Activated CD4-positive, alpha-beta T cell treated with anti-CD3 and anti-CD28 coated beads for 36 hours (primary cell): ENCODE measurements at regions of chr16 and their contacts with region 1.

Region 1: GRCh38 chr16:28990375-28991040 is 5.7 kb downstream of the LAT start:
- DNase-seq: peak; percentile 88
- ATAC-seq: peak; percentile 84
- H3K4me3 Mint-ChIP-seq: peak overlapping the region; percentile 99
- H3K27ac Mint-ChIP-seq: peak overlapping the region; percentile 97
- H3K4me1 Mint-ChIP-seq: peaks cover 64% of the 10 kb centered on the region
- H3K27me3 Mint-ChIP-seq: no peaks in the 10 kb centered on the region

Region 2: DNA sequence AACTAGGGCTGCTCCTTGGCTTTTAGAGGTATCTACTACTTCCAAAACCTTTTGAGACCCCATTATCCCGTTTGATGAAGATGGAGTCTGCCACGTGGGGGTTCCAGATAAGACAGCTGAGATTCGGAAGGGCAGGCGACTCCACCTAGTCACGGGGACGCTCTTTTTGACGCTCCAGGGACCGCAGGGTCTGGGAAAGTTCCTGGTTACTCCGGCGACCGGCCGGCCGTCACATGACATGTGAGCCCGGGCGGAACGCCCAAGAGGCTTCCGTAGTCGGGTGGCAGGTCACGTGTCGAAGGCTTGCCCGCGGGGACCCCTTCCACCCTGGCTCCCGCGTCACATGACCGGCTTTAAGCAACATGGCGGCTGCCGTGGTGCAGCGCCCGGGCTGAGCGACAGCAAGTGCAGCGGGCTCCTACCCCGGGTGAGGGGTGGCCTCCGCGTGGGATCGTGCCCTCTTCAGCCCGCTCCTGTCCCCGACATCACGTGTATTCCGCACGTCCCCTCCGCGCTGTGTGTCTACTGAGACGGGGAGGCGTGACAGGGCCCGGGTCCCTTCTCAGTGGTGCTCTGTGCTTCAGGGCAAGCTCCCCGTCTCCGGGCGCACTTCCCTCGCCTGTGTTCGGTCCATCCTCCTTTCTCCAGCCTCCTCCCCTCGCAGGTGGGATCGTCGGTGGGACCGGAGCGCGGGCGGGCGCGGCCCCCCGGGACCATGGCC is 15.9 kb before region 1 on chr16 and contains the start of gene SPNS1:
- CTCF ChIA-PET with region 1: interaction called, 32 read pairs
- POLR2A ChIA-PET with region 1: interaction called, 3 read pairs
- intact Hi-C with region 1: loop called in 1 of 2 experiments (anchors 1 kb)
- DNase-seq: peak; percentile 98
- ATAC-seq: peak; percentile 94
- H3K4me3 Mint-ChIP-seq: peak within 1 kb of the TSS; percentile 98
- H3K27ac Mint-ChIP-seq: peak within 1 kb of the TSS; percentile 93
- H3K4me1 Mint-ChIP-seq: peaks cover 30% of the 10 kb centered on the region
- H3K27me3 Mint-ChIP-seq: no peaks in the 10 kb centered on the region
- total RNA-seq, gene SPNS1: 12.7 to 14.2 TPM

Region 3: GRCh38 chr16:29007730-29008593 is 17.5 kb after region 1 on chr16:
- CTCF ChIA-PET with region 1: interaction called, 4 read pairs
- POLR2A ChIA-PET with region 1: interaction called, 6 read pairs
- intact Hi-C with region 1: loop called (anchors 1 kb)
- DNase-seq: peak; percentile 89
- ATAC-seq: peak; percentile 91
- H3K4me3 Mint-ChIP-seq: peak overlapping the region; percentile 33
- H3K27ac Mint-ChIP-seq: peak overlapping the region; percentile 91
- H3K4me1 Mint-ChIP-seq: peaks cover 63% of the 10 kb centered on the region
- H3K27me3 Mint-ChIP-seq: no peaks in the 10 kb centered on the region

Region 4: DNA sequence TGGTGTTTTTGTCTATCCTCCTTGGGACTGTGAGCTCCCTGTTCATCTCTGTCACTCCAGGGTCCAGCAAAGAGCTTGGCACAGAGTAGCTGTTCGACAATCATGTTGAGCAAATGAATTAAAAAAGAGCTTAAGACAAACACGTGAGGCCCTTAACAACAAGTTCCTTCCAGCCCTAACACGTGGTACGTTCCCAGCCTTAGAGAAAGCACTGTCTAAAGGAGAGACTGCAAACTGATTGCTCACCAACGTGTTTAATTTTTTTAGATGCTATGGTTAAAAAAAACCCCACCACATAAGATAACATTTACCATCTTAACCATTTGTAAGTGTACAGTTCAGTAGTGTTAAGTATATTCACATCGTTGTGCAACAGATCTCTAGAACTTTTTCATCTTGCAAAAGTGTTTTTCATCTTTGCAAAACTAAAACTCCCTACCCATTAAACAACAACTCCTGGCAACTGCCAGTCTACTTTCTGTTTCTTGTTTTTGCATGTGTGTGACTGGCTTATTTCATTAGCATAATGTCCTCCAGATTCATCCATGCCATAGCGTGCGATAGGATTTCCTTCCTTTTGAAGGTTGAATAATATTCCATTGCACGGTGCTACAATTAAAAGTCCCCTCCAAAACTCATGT is 22.5 kb after region 1 on chr16:
- CTCF ChIA-PET with region 1: interaction called, 4 read pairs
- POLR2A ChIA-PET with region 1: interaction called, 6 read pairs
- intact Hi-C with region 1: loop called (anchors 1 kb)
- DNase-seq: peak; percentile 48
- ATAC-seq: peak; percentile 44
- H3K4me3 Mint-ChIP-seq: no peak overlapping the region
- H3K27ac Mint-ChIP-seq: peak overlapping the region; percentile 93
- H3K4me1 Mint-ChIP-seq: peaks cover 68% of the 10 kb centered on the region
- H3K27me3 Mint-ChIP-seq: no peaks in the 10 kb centered on the region

Region 5: GRCh38 chr16:29023279-29024277 is 33.1 kb after region 1 on chr16:
- CTCF ChIA-PET with region 1: interaction called, 7 read pairs
- POLR2A ChIA-PET with region 1: interaction called, 11 read pairs
- intact Hi-C with region 1: loop called (anchors 1 kb)
- DNase-seq: peak; percentile 45
- ATAC-seq: no peak
- H3K4me3 Mint-ChIP-seq: no peak overlapping the region
- H3K27ac Mint-ChIP-seq: peak overlapping the region; percentile 82
- H3K4me1 Mint-ChIP-seq: peaks cover 74% of the 10 kb centered on the region
- H3K27me3 Mint-ChIP-seq: no peaks in the 10 kb centered on the region

Region 6: DNA sequence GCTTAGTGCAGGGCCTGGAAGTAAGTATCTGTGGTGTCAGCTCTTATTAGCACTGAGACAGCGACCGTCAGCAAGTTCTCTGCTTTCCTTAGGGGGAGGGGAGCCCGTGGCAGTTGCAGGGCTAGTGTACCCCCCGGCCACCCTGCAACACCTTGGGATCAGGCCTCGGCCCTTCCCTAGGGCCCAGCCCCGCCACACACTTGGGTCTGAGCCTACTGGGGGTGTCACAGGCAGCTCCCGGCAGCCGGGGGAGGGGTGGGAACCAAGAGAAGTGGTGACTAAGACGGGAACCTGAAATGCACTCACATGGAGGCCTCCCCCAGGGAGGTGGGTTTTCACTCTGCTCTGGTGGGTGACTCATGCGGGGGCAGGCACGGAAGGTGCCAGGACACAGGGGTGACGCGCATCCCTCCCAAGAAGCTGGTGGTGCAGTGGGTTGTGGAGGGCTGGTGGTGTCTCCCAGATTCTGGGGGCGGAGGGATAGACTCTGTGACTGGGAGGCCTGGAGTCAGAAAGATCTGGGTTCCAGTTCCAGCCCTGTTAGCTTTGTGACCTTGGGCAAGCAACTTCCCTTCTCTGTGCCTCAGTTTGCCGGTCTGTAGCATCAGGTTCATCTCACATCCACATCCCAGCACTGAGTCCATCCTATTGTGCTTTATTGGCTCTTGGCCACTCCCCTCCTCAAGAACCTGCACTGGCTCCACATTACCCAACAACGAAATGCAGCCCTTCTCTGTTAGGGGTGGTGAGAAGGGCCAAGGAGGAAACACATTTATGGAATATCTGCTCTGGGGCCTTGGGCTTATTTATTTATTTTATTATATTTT is 38.9 kb after region 1 on chr16:
- CTCF ChIA-PET with region 1: interaction called, 5 read pairs
- POLR2A ChIA-PET with region 1: interaction called, 3 read pairs
- intact Hi-C with region 1: loop called (anchors 1 to 2 kb)
- DNase-seq: peak; percentile 96
- ATAC-seq: peak; percentile 96
- H3K4me3 Mint-ChIP-seq: peak overlapping the region; percentile 0
- H3K27ac Mint-ChIP-seq: peak overlapping the region; percentile 84
- H3K4me1 Mint-ChIP-seq: peaks cover 46% of the 10 kb centered on the region
- H3K27me3 Mint-ChIP-seq: no peaks in the 10 kb centered on the region